ENCODE measurements at regions of chr7 and their contacts with region 1.

Region 1: GRCh38 chr7:52917982-52918578 is 117.4 kb upstream of the POM121L12 start:
- DNase-seq: peak; percentile 11
- H3K4me3 Mint-ChIP-seq: no peak overlapping the region
- H3K27ac Mint-ChIP-seq: no peak overlapping the region
- H3K4me1 Mint-ChIP-seq: no peaks in the 10 kb centered on the region
- H3K27me3 Mint-ChIP-seq: peaks cover 49% of the 10 kb centered on the region
- CTCF ChIP-seq: peak; percentile 41

Region 2: DNA sequence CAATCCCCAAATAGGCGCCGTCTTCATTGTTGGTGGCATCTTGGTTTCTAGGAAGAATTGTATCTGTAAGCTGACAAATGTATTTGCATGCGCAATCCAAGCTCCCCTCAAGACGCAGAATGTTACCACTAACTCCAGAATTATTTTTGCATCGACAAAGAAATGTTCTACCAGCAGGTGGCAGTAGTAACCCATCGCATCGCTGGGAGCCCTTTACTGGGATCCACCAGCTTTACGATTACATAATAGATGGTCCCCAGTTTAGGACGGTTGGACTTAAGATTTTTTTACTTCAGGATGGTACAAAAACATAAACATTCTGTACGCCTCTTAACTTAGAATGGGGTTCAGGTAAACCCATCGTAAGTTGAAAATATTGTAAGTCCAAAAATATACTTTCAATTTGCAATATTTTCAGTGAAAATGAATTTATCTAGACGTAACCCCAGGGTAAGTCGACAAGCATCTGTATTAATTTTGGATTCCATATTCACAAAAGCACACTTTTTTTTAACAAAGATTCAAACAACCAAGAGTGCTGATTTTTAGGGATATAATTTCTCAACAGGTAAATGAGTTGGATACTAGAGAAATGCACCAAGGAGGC is 1487.5 kb before region 1 on chr7:
- CTCF ChIA-PET with region 1: interaction called, 5 read pairs
- POLR2A ChIA-PET with region 1: no interaction called
- intact Hi-C with region 1: loop called (anchors 2 kb)
- DNase-seq: peak; percentile 67
- H3K4me3 Mint-ChIP-seq: no peak overlapping the region
- H3K27ac Mint-ChIP-seq: no peak overlapping the region
- H3K4me1 Mint-ChIP-seq: no peaks in the 10 kb centered on the region
- H3K27me3 Mint-ChIP-seq: peaks cover 83% of the 10 kb centered on the region
- CTCF ChIP-seq: peak; percentile 84

Region 3: GRCh38 chr7:51601461-51601860 is 1316.6 kb before region 1 on chr7:
- CTCF ChIA-PET with region 1: no interaction called
- POLR2A ChIA-PET with region 1: no interaction called
- intact Hi-C with region 1: loop called (anchors 5 kb)
- DNase-seq: peak; percentile 6
- H3K4me3 Mint-ChIP-seq: no peak overlapping the region
- H3K27ac Mint-ChIP-seq: no peak overlapping the region
- H3K4me1 Mint-ChIP-seq: no peaks in the 10 kb centered on the region
- H3K27me3 Mint-ChIP-seq: peaks cover 73% of the 10 kb centered on the region
- CTCF ChIP-seq: peak; percentile 14

Region 4: DNA sequence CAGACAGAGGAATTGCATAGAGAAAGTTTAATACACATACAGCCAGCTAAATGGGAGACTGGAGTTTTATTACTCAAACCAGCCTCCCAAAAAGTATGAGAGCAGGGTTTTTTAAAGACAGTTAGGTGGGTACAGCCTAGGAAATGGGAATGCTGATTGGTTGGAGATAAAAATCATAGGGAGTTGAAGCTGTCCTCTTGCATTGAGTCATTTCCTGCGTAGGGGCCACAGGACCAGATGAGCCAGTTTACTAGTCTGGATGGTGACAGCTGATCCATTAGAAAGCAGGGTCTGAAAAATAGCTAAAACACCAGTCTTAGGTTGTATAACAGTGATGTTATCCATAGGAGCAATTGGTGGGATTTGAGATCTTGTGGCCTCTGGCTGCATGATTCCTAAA is 41.3 kb after region 1 on chr7:
- CTCF ChIA-PET with region 1: no interaction called
- POLR2A ChIA-PET with region 1: no interaction called
- intact Hi-C with region 1: no loop called
- DNase-seq: no peak
- H3K4me3 Mint-ChIP-seq: no peak overlapping the region
- H3K27ac Mint-ChIP-seq: no peak overlapping the region
- H3K4me1 Mint-ChIP-seq: peaks cover 7% of the 10 kb centered on the region
- H3K27me3 Mint-ChIP-seq: peaks cover 14% of the 10 kb centered on the region
- CTCF ChIP-seq: no peak

Region 5: GRCh38 chr7:52980129-52980528 is 62.0 kb after region 1 on chr7:
- CTCF ChIA-PET with region 1: no interaction called
- POLR2A ChIA-PET with region 1: no interaction called
- intact Hi-C with region 1: no loop called
- DNase-seq: no peak
- H3K4me3 Mint-ChIP-seq: no peak overlapping the region
- H3K27ac Mint-ChIP-seq: no peak overlapping the region
- H3K4me1 Mint-ChIP-seq: no peaks in the 10 kb centered on the region
- H3K27me3 Mint-ChIP-seq: no peaks in the 10 kb centered on the region
- CTCF ChIP-seq: no peak

Region 6: GRCh38 chr7:53022893-53023292 is 104.8 kb after region 1 on chr7:
- CTCF ChIA-PET with region 1: no interaction called
- POLR2A ChIA-PET with region 1: no interaction called
- intact Hi-C with region 1: no loop called
- DNase-seq: no peak
- H3K4me3 Mint-ChIP-seq: no peak overlapping the region
- H3K27ac Mint-ChIP-seq: no peak overlapping the region
- H3K4me1 Mint-ChIP-seq: no peaks in the 10 kb centered on the region
- H3K27me3 Mint-ChIP-seq: peaks cover 31% of the 10 kb centered on the region
- CTCF ChIP-seq: no peak